Panc1 (cell line): ENCODE measurements at regions of chr17 and their contacts with region 1.

Region 1: DNA sequence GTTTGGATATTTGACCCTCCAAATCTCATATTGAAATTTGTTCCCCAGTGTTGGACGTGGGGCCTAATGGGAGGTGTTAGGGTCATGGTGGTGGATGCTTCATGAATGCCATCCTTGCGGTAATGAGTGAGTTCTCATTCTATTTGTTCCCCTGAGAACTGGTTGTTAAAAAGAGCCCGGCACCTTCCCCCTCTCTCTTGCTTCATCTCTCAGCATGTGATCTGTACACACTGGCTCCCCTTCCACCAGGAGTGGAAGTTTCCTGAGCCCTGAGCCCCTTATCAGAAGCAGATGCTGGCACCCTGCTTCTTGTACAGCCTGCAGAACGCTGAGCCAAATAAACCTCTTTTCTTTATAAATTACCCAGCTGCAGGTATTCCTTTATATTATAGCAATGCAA is 25.6 kb downstream of the PIK3R6 start:
- DNase-seq: no peak
- ATAC-seq: no peak
- H3K4me3 ChIP-seq: no peak overlapping the region
- H3K27ac ChIP-seq: no peak overlapping the region
- H3K4me1 ChIP-seq: no peaks in the 10 kb centered on the region
- H3K27me3 ChIP-seq: no peaks in the 10 kb centered on the region
- CTCF ChIP-seq: no peak

Region 2: GRCh38 chr17:8776881-8777280 is 65.0 kb before region 1 on chr17:
- CTCF ChIA-PET with region 1: interaction called, 11 read pairs
- POLR2A ChIA-PET with region 1: no interaction called
- in situ Hi-C with region 1: no loop called
- intact Hi-C with region 1: no loop called
- DNase-seq: no peak
- ATAC-seq: no peak
- H3K4me3 ChIP-seq: no peak overlapping the region
- H3K27ac ChIP-seq: no peak overlapping the region
- H3K4me1 ChIP-seq: no peaks in the 10 kb centered on the region
- H3K27me3 ChIP-seq: peaks cover 8% of the 10 kb centered on the region
- CTCF ChIP-seq: no peak

Region 3: DNA sequence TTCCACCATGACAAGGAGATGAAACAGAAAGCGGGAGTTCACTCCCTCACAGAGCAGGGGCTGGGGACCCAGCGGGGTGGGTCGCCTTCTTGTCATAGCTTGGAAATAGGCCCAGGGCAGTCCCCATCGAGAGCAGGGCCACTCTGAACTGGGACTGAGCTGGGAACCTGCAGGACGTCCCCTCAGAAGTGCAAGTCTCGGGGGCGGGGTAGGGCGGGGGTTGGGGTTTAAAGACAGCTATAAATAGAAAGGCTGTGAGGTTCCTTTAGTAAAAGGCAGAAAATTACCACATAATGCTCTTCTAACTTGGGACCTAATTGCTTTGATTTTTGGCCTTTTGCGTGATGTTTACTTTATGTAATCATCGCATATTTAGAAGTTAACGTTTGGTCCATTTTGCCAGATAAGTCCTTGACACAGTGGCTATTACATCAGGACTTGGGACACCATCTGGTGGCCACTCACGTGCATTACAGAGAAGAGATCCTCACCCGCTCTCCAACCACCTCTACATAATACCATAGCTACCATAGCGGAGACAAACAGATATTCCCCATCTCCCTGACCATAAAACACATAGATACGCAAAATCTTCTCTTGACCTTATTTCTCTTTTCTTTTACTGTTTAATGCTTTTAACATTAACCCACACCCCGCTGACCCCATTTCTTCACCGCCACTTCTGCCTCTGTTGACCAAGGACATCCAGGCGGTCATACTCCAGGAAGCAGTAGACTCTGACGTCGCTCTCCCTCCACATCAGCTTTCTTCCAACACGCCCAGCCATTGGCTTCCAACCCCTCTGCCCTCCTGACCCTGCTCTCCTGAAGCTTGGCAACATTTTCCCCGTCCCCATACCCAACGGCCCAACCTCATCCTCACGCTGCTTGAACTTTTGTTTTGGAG is 53.1 kb after region 1 on chr17:
- CTCF ChIA-PET with region 1: no interaction called
- POLR2A ChIA-PET with region 1: no interaction called
- in situ Hi-C with region 1: no loop called
- intact Hi-C with region 1: no loop called
- DNase-seq: no peak
- ATAC-seq: peak; percentile 93
- H3K4me3 ChIP-seq: no peak overlapping the region
- H3K27ac ChIP-seq: no peak overlapping the region
- H3K4me1 ChIP-seq: no peaks in the 10 kb centered on the region
- H3K27me3 ChIP-seq: peaks cover 2% of the 10 kb centered on the region; the same call in 1 of the 2 replicates
- CTCF ChIP-seq: peak; percentile 84